Activated CD4-positive, alpha-beta memory T cell treated with anti-CD3 and anti-CD28 coated beads for 36 hours (primary cell): ENCODE measurements at regions of chr16 and their contacts with region 1.

Region 1: GRCh38 chr16:30091474-30092372 is at the start of gene TBX6:
- DNase-seq: peak; percentile 96
- H3K4me3 Mint-ChIP-seq: peak within 1 kb of the TSS; percentile 83
- H3K27ac Mint-ChIP-seq: peak within 1 kb of the TSS; percentile 94
- H3K4me1 Mint-ChIP-seq: peaks cover 44% of the 10 kb centered on the region
- H3K27me3 Mint-ChIP-seq: no peaks in the 10 kb centered on the region
- total RNA-seq, gene TBX6: 2.3 to 2.9 TPM

Region 2: DNA sequence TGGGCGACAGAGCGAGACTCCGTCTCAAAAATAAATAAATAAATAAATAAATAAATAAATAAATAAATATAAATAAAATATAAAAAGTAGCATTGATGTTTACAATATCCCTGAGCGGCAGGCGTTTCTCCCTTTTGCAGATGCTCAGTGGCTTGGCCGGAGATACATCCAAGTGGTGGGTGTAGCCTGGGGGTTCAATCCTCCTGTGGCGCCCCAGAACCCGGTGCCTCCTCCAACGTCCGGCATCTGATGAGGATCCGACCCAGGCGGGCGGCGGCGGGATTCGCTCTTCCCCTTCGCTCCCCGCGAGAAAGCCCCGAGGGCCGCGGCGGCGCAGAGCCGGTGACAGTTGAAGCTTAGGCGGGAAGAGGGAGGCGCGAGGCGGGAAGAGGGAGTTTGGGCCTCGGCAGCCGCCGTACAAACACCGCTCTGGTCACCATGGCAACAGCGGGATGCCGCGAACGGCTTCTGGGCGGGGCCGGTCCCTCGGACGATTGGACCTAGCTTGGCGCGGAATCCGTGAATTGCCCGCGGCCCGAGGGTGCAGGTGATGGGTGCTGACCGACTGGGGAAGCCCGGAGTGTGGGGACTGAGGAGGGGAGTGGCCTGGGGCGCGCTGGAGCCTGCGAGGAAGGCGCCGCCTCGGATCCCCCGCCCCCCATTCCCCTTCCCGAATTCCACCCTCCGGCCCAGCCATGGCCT is 38.9 kb before region 1 on chr16:
- CTCF ChIA-PET with region 1: interaction called, 25 read pairs
- POLR2A ChIA-PET with region 1: interaction called, 7 read pairs
- intact Hi-C with region 1: loop called (anchors 5 kb)
- DNase-seq: peak; percentile 95
- H3K4me3 Mint-ChIP-seq: peak overlapping the region; percentile 86
- H3K27ac Mint-ChIP-seq: peak overlapping the region; percentile 49
- H3K4me1 Mint-ChIP-seq: peaks cover 28% of the 10 kb centered on the region
- H3K27me3 Mint-ChIP-seq: no peaks in the 10 kb centered on the region

Region 3: GRCh38 chr16:30075507-30076275 is 16.0 kb before region 1 on chr16 and contains the start of gene PPP4C:
- CTCF ChIA-PET with region 1: interaction called, 76 read pairs
- POLR2A ChIA-PET with region 1: interaction called, 22 read pairs
- intact Hi-C with region 1: loop called (anchors 2 kb)
- DNase-seq: peak; percentile 95
- H3K4me3 Mint-ChIP-seq: peak within 1 kb of the TSS; percentile 91
- H3K27ac Mint-ChIP-seq: peak within 1 kb of the TSS; percentile 93
- H3K4me1 Mint-ChIP-seq: peaks cover 39% of the 10 kb centered on the region
- H3K27me3 Mint-ChIP-seq: no peaks in the 10 kb centered on the region
- total RNA-seq, gene PPP4C: 121 to 133 TPM

Region 4: DNA sequence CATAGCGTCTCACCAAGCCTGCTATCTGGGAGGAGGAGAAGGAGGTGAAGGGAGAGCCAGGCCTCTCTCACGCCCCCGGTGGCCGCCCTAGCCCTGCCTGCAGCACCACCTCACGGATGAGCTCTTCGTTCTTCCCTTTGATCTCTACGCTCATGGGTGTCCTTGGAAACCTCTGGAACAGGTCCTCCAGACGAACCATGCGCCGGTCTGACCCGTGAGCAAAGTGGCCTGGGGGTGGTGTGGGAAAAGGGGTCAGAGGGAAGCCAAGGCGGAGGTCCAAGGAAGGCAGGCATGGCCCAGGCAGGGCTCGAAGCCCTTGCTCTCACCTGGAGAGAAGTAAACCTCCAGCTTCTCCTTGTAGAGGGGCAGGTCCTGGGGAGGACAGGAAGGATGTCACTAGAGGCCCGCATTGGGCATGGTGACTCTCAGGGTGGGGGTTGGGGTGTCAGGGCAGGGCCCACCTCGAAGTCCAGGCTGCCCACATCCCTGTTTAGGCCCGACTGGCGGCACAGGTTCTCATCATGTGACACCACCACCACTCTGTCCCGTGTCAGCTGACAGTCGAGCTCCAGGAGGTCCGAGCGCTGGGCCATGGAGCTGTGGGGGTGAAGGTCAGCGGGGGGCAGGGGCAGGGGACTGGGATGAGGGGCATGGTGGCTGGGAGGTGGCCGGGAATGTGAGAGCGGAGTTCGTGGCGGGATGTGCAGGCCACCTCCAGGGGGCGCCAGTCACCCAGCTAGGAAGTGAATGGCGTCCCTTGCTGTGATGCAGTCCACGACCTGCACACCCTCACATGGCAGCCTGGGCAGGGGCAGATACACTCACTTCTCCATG is 20.7 kb after region 1 on chr16:
- CTCF ChIA-PET with region 1: interaction called, 23 read pairs
- POLR2A ChIA-PET with region 1: interaction called, 4 read pairs
- intact Hi-C with region 1: no loop called
- DNase-seq: peak; percentile 79
- H3K4me3 Mint-ChIP-seq: no peak overlapping the region
- H3K27ac Mint-ChIP-seq: no peak overlapping the region
- H3K4me1 Mint-ChIP-seq: peaks cover 16% of the 10 kb centered on the region
- H3K27me3 Mint-ChIP-seq: no peaks in the 10 kb centered on the region

Region 5: GRCh38 chr16:30142672-30143346 is 51.1 kb after region 1 on chr16:
- CTCF ChIA-PET with region 1: interaction called, 4 read pairs
- POLR2A ChIA-PET with region 1: no interaction called
- intact Hi-C with region 1: loop called (anchors 5 kb)
- DNase-seq: peak; percentile 33
- H3K4me3 Mint-ChIP-seq: no peak overlapping the region
- H3K27ac Mint-ChIP-seq: peak overlapping the region; percentile 33
- H3K4me1 Mint-ChIP-seq: peaks cover 15% of the 10 kb centered on the region
- H3K27me3 Mint-ChIP-seq: no peaks in the 10 kb centered on the region

Region 6: GRCh38 chr16:30378236-30379204 is 286.8 kb after region 1 on chr16:
- CTCF ChIA-PET with region 1: no interaction called
- POLR2A ChIA-PET with region 1: no interaction called
- intact Hi-C with region 1: loop called (anchors 1 kb)
- DNase-seq: peak; percentile 100
- H3K4me3 Mint-ChIP-seq: peak overlapping the region; percentile 99
- H3K27ac Mint-ChIP-seq: peak overlapping the region; percentile 96
- H3K4me1 Mint-ChIP-seq: peaks cover 44% of the 10 kb centered on the region
- H3K27me3 Mint-ChIP-seq: no peaks in the 10 kb centered on the region